Activated CD8-positive, alpha-beta memory T cell treated with anti-CD3 and anti-CD28 coated beads, Interleukin-2, amount 10 ng/mL, durations not matched to agents 7 days and 5 days (primary cell): ENCODE measurements at regions of chr15 and their contacts with region 1.

Region 1: DNA sequence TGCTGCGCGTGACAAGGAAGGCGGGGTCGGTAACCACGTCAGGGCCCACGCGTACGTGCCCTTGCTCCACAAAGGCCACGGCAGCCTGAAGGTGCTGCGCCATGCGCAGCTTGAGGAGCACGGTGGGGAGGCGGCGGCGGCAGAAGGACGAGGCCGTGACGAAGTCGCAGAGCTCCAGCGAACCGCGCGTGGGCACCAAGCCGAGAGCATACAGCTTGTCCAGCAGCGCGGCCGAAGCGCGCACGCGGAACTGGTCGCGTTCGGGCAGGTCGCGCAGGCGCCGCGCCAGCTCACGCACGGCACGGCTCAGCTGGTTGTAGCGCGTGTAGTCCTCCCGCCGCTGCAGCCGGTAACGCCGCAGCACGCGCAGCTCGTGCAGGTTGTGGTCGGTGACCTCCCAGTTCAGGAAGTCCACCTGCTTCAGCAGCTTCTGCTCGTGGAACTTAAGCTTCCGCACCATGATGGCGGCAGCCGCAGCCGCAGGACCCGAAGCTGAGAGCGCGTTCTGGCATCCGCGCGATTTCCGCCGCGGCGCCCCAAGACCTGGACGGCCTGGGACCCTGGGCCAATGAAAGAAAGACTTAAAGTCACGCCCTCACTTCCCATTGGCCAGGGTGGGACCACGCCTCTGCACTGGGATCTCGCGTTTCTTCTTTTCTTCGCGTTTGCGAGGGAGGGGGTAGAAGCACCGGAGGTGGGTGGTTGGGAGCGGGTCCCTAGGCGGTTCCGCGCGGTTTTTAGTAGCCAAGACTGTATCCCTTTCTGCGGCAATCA is at the start of gene IMP3:
- DNase-seq: peak; percentile 98
- ATAC-seq: peak; percentile 94
- H3K4me3 Mint-ChIP-seq: peak within 1 kb of the TSS; percentile 91
- H3K27ac Mint-ChIP-seq: peak within 1 kb of the TSS; percentile 93
- H3K4me1 Mint-ChIP-seq: peaks cover 35% of the 10 kb centered on the region
- H3K27me3 Mint-ChIP-seq: no peaks in the 10 kb centered on the region
- total RNA-seq, gene IMP3: 84.0 to 109 TPM

Region 2: DNA sequence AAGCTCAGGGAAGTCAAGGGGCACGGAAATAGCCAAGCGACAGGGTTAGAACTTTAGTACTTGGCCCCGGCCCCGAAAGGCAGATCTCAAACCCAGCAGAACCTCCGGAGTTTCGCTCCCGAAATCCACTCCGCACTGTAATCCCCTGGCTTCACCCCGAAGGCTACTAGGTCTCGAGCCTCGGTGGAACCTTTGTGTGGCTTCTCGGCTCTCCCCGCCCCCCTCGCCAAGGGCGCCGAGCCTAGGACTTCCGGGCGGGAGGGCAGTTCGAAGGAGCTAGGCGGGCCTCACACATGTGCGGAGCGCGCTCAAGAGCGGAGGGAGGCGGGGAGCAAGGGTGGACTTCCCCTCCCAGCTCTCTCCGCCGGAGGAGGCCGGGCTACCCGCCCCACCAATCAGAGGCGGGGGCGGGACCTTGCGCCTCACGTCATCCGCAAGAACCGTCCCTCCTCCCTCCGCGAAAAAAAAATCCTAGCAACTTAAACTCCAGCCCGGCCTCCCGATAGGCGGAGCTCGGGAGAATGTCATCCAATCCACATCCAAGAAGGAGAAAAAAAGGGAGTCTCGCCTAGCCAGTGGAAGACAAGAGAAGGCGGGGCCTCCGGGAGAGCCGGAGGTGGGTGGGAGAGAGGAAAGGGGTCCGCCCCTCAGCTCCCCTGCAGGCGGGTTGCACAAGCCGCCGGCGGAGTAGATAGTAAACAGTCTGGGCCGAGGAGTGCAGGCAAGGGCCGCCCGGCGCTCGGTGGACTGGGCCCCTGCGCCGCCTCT is 186.0 kb before region 1 on chr15:
- CTCF ChIA-PET with region 1: interaction called, 57 read pairs
- DNase-seq: peak; percentile 99
- ATAC-seq: peak; percentile 50
- H3K4me3 Mint-ChIP-seq: peak overlapping the region; percentile 98
- H3K27ac Mint-ChIP-seq: peak overlapping the region; percentile 98
- H3K4me1 Mint-ChIP-seq: peaks cover 28% of the 10 kb centered on the region
- H3K27me3 Mint-ChIP-seq: no peaks in the 10 kb centered on the region

Region 3: GRCh38 chr15:75508840-75509532 is 130.9 kb before region 1 on chr15:
- CTCF ChIA-PET with region 1: interaction called, 25 read pairs
- DNase-seq: peak; percentile 43
- ATAC-seq: peak; percentile 30
- H3K4me3 Mint-ChIP-seq: no peak overlapping the region
- H3K27ac Mint-ChIP-seq: no peak overlapping the region
- H3K4me1 Mint-ChIP-seq: no peaks in the 10 kb centered on the region
- H3K27me3 Mint-ChIP-seq: no peaks in the 10 kb centered on the region

Region 4: DNA sequence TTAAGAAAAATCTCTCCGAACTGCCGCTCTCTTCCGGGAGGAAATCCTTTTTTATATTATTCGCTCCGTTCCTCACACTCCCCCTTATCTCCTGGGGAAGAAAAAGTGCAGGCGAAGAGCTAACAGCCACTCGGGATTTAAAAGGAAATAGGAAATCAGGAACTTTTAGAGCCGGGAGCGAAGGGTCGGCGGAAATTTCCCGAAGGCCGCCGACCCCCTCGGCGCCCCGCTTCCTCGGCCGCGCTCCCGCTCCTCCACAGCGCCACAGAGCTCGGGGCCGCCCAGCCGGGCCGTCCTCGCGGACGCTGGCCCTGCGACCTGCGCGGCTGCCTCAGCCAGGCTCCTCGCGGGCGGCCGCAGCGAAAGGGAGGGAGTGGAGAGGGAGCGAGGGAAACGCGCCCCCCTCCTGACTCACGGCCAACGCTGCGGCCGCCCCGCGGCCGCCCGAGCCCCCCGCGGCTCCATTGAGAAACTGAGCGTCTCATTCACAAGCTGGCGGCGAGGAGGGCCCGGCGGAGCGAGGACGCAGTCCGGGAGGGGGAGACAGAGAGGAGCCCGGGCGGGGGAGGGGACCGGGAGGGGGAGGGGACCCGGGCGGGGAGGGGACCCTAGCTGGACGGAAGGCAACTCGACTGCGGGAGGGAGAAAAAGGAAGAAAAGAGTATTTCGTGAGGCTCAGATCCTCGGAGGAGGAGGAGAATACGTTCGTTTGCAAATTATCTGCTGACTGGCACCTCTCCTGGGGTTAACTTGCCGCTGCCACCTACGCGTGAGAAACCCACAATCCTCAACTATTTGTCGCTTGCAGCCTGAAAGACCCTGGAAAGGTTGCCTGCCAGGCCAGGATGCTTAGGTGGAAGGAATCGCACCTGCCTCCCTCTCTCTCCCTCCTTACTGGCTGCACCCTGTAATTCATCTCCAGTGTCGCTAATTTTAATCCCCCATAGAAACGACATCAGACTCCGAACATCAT is 60.7 kb before region 1 on chr15 and contains the start of gene PTPN9:
- CTCF ChIA-PET with region 1: interaction called, 16 read pairs
- DNase-seq: peak; percentile 84
- ATAC-seq: peak; percentile 87
- H3K4me3 Mint-ChIP-seq: peak within 1 kb of the TSS; percentile 85
- H3K27ac Mint-ChIP-seq: peak within 1 kb of the TSS; percentile 91
- H3K4me1 Mint-ChIP-seq: peaks cover 26% of the 10 kb centered on the region
- H3K27me3 Mint-ChIP-seq: no peaks in the 10 kb centered on the region
- total RNA-seq, gene PTPN9: 34.0 to 41.9 TPM

Region 5: DNA sequence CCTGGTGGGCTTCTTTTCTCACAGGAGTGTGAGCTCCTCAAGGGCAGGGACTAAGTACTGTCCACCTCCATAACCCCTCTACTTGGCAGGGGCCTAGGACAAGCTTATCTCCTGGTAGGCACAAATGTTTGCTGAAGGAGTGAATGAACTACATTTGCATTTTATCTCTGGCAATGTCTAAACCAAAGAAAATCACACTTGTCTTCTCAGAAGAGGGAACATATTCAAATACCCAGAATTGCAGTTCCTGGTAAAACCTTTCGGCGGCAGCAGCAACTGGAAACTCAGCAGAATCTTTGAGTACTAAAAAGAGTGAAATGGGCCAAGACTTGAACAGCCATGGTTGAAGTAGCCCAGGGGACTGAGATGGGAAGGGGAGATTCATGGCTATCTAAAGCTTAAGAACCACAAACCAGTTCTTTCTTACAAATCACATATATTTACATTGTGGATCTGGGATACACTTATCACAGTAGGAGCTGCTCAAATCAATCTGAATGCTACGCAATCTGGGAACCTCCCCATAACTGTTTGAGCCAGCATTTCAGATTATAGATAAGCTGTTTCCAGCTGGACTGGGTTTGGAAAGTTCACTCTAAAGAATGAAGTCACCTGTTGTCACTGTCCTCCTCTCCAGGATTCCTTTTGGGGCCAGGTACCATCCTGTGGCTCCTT is 42.1 kb before region 1 on chr15:
- CTCF ChIA-PET with region 1: interaction called, 52 read pairs
- DNase-seq: peak; percentile 84
- ATAC-seq: peak; percentile 83
- H3K4me3 Mint-ChIP-seq: peak overlapping the region; percentile 46
- H3K27ac Mint-ChIP-seq: peak overlapping the region; percentile 92
- H3K4me1 Mint-ChIP-seq: peaks cover 41% of the 10 kb centered on the region
- H3K27me3 Mint-ChIP-seq: no peaks in the 10 kb centered on the region

Region 6: GRCh38 chr15:75625542-75626347 is 14.2 kb before region 1 on chr15 and contains the start of gene SNUPN:
- CTCF ChIA-PET with region 1: interaction called, 23 read pairs
- DNase-seq: peak; percentile 97
- ATAC-seq: peak; percentile 90
- H3K4me3 Mint-ChIP-seq: peak within 1 kb of the TSS; percentile 96
- H3K27ac Mint-ChIP-seq: peak within 1 kb of the TSS; percentile 99
- H3K4me1 Mint-ChIP-seq: peaks cover 31% of the 10 kb centered on the region
- H3K27me3 Mint-ChIP-seq: no peaks in the 10 kb centered on the region
- total RNA-seq, gene SNUPN: 25.8 to 27.3 TPM

Region 7: DNA sequence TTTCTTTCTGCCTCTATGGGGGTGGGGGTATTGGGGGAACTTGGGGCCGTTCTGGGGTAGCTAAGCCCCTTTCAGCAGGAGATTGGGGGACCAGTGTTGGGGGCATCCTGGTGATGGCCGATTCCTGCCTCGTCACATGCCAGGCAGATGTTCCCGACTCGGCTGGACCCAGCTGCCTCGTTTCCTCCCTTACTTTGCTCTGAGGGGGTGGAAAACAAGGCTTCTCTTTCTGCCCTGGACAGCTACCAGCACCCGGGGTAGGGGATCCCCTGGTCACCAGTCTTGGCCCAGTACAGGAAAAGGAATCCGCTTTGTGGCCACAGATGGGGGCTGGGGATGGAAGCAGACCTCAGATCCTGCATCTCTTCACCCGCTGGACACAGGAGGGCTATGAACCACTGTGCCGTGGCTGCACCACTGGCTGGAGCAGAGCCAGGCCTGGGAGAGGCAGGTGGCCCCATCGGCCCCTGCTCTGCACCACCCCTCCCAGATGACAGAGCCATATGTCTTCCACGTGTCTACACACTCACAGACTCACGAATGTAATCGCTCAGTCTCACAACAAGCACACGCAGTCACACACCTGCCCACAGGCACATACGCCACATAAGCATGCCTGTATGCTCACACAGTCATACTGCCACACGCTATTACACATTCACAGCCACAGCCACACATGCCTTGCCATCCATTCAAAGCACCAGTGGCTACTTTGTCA is 20.2 kb after region 1 on chr15:
- CTCF ChIA-PET with region 1: no interaction called
- DNase-seq: no peak
- ATAC-seq: no peak
- H3K4me3 Mint-ChIP-seq: no peak overlapping the region
- H3K27ac Mint-ChIP-seq: no peak overlapping the region
- H3K4me1 Mint-ChIP-seq: no peaks in the 10 kb centered on the region
- H3K27me3 Mint-ChIP-seq: no peaks in the 10 kb centered on the region

Region 8: DNA sequence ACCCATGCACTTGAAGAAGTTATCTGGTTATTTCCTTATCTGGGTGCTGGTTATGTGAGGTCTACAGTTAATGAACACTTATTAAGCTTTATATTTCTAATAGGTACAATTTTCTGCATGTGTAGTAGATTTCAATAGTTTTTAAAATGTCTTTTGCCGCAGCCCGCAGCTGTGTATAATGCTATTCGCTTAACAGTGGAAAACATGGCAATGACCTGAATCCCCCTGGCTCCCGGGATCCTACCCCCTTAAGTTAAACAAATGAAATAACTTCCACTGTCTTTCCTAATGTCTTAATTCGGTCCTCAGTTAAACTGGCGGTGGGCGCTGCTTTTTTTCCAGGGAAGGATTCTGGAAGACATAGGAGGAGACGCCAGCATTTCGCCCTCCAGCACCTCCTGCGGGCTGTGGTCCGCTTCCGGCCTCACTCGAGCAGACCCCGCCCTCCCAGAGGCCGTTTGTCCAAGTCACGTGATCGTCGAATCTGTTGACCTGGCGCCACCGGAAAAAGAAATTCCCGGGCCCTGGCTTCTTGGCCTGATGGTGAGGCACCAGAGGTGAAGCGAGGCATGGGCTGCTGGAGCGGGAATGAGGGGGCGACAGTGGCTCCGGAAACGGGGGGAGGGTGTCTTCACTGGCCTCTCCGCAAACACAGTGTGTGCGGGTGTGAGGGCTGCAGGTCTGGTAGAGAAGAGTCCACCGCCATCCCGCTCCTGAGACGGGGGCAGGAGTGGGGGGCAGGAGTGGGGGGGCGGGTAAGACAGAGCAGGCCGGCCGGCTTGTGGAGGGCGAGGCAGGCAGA is 118.4 kb after region 1 on chr15:
- CTCF ChIA-PET with region 1: no interaction called
- DNase-seq: peak; percentile 81
- ATAC-seq: peak; percentile 91
- H3K4me3 Mint-ChIP-seq: peak overlapping the region; percentile 81
- H3K27ac Mint-ChIP-seq: peak overlapping the region; percentile 85
- H3K4me1 Mint-ChIP-seq: peaks cover 12% of the 10 kb centered on the region
- H3K27me3 Mint-ChIP-seq: peaks cover 4% of the 10 kb centered on the region